Posterior vena cava (tissue), 2 donors: ENCODE measurements at regions of chr16 and their contacts with region 1.

Region 1: DNA sequence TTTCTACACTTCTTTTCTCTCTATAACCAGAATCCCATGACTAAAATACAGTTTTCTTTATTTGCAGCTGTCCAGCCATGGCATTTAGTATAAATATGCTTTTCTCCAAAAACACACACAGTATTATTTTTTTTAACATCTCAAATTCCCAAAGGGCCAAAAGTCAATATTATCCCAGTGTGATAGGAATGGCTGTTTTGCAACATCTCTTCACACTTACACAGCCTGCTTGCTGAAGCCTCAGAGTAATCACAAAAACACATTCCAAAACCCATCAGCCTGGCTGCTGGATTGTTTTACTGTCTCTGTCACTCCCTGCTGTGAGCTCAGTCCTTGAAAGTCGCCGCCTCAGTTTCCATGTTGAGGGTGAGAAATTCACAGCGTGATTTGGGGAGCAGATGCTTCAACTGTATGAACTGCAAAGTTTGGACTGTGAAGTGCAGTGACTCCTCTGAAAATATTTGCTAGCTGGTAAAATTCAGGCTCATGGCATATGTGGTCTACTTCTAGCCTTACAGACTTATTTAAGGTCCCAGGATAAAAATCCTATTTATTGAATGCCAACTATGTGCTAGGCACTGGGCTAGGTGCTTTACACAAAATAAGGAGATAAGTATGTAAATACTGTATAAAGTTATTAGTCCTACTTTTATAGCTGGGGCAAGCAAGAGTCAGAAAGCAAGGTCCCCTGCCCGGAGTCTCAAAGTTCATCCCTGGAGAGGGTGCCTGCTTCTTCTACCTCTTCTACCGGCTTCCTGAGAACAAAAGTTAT is 116.5 kb downstream of the SOCS1 start:
- DNase-seq: no peak

Region 2: GRCh38 chr16:10103118-10103517 is 1036.4 kb before region 1 on chr16:
- intact Hi-C with region 1: loop called in 1 of 2 experiments (anchors 5 kb)
- DNase-seq: no peak

Region 3: GRCh38 chr16:10641953-10642949 is 497.3 kb before region 1 on chr16:
- intact Hi-C with region 1: no loop called
- DNase-seq: no peak

Region 4: DNA sequence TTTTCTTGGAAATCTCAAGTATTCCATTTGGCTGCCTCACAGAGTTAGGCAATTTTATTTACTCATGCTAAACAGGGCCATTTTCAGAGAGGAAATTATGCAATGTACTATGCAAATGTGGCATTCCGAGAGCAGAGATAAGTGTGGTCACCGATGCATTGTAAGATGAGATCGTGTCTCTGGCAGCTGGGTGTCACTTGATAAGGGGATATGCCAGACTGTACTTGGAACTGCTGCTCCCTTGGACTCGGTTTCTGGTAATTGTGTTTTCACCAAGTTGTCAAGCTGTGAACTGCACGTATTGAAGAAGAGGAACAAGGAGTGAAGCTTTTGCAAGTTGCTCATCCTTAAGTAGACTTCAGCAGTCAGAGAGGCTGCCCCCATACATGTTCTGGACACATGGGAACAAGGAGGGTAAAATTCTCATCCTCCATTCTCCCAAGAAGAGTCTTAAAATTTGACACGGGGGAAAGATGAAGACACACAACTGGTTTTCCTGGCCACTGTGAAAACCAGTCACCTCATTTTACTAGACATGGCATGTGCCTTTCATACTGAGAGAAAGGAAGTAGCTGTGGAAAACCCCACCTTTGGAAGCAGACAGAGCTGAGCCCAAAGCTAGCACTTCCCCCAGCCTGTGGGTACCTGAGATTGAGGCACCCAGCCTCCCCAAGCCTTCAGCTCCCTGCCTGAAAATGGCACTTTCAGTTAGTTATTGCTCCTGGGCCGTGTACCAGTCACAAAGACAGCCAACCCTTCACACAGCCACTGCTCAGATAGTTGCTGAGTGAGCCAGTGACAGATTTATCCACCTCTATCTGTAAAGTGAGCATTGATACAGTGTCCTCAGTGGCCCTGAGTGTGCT is 34.2 kb before region 1 on chr16:
- intact Hi-C with region 1: no loop called
- DNase-seq: no peak

Region 5: GRCh38 chr16:11168386-11169051 is 29.0 kb after region 1 on chr16:
- intact Hi-C with region 1: no loop called
- DNase-seq: no peak

Region 6: GRCh38 chr16:11218604-11218962 is 79.1 kb after region 1 on chr16:
- intact Hi-C with region 1: no loop called
- DNase-seq: no peak